ENCODE measurements at regions of chr6 and their contacts with region 1.

Region 1: GRCh38 chr6:87322304-87323212 is at the start of gene SMIM8:
- DNase-seq: peak; percentile 97
- H3K4me3 Mint-ChIP-seq: peak within 1 kb of the TSS; percentile 99
- H3K27ac Mint-ChIP-seq: peak within 1 kb of the TSS; percentile 91
- H3K4me1 Mint-ChIP-seq: peaks cover 11% of the 10 kb centered on the region
- H3K27me3 Mint-ChIP-seq: peaks cover 8% of the 10 kb centered on the region
- total RNA-seq, gene SMIM8: 8.1 and 10.5 TPM in 2 replicates

Region 2: DNA sequence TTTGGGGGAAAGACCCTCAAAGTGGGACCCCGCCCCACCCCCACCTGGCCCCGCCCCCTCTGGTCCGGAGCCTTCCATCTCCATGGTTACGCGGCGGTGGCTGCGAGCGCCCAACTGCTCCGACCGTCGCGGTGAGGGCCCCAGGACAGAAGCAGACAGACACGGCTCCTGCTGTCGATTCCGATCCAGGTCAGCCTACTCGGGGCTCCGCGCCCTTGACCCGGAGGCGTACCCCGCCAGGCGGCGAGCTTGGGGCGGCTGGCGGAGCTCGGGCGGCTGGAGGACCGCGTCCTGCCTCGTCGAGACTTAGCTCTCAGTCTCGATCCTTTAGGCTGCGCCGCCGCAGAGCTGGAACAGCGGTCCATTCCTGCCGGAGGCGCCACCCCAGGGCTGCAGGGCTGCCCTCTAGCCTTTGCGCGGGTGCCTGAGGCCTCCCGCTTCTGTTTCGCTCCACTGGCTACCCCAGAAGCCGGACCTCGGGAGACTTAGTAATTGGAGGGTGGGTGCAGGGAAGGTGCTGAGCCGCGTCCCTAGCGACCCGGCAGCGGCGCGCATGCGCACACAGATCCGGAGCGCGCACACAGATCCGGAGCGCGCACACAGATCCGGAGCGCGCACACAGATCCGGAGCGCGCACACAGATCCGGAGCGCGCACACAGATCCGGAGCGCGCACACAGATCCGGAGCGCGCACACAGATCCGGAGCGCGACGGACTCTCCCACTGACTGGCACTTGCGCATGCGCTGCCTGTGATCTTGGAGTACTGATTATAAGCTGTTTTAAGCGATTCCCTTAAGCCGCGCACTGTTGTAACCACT is 85.6 kb after region 1 on chr6 and contains the start of gene CFAP206:
- intact Hi-C with region 1: loop called (anchors 2 kb)
- DNase-seq: peak; percentile 91
- H3K4me3 Mint-ChIP-seq: peak within 1 kb of the TSS; percentile 86
- H3K27ac Mint-ChIP-seq: peak within 1 kb of the TSS; percentile 59
- H3K4me1 Mint-ChIP-seq: peaks cover 3% of the 10 kb centered on the region
- H3K27me3 Mint-ChIP-seq: peaks cover 25% of the 10 kb centered on the region
- total RNA-seq, gene CFAP206: not detected in 2 replicates

Region 3: DNA sequence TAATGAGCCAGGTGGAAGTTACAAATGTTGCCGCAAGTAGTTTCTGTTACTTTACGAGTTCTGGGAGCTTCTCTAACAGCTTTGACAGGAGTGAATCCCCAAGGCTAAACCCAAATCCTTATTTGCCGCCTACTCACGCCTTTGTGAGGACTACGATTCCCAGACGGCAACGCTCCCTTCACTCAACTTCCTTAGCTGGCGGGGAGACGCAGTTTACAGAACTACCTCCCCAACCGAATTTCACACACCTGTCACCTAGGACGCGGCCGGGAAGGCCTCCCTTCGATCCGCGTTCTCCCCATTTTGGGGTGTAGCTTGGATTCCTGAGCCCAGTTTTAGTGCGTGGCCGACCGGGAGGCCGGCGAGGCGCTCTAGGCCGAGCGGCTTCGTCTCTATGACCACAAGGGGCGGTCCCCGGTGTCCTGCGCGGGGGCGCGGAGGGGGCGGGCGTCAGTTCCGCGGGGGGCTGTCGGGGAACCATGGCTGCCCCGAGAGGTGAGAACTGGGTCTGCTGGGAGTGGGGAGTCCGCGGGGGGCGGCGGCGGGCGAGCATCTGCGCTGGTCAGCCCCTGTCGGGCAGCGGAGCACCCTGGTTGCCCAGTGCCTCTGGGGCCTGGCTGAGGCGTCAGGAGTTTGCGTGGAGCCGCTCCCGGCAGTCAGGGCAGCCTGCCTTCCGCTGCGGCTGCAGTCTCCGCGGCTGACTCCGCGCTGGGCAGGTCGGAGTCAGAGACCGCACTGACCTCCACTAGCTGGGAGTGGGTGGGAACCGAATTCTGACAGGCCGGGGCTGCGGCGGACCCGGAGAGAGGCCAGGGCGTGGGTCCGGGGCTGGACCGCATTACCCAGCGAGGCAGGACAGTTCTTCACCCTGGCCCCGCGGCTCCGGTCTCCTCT is 150.2 kb after region 1 on chr6 and contains the start of gene SLC35A1:
- intact Hi-C with region 1: loop called (anchors 1 kb)
- DNase-seq: peak; percentile 96
- H3K4me3 Mint-ChIP-seq: peak within 1 kb of the TSS; percentile 95
- H3K27ac Mint-ChIP-seq: peak within 1 kb of the TSS; percentile 97
- H3K4me1 Mint-ChIP-seq: peaks cover 17% of the 10 kb centered on the region
- H3K27me3 Mint-ChIP-seq: peaks cover 8% of the 10 kb centered on the region
- total RNA-seq, gene SLC35A1: 8.8 and 9.1 TPM in 2 replicates

Region 4: GRCh38 chr6:88963139-88964090 is 1640.9 kb after region 1 on chr6 and contains the start of gene RNGTT:
- intact Hi-C with region 1: loop called (anchors 10 kb)
- DNase-seq: peak; percentile 99
- H3K4me3 Mint-ChIP-seq: peak within 1 kb of the TSS; percentile 98
- H3K27ac Mint-ChIP-seq: peak within 1 kb of the TSS; percentile 94
- H3K4me1 Mint-ChIP-seq: peaks cover 25% of the 10 kb centered on the region
- H3K27me3 Mint-ChIP-seq: peaks cover 4% of the 10 kb centered on the region
- total RNA-seq, gene RNGTT: 23.8 and 25.9 TPM in 2 replicates

Measured in activated CD4-positive, alpha-beta T cell treated with anti-CD3 and anti-CD28 coated beads, Interleukin-2, amount 10 ng/mL, durations not matched to agents 24 days and 14 days (primary cell).